Psoas muscle (tissue), 8 donors: ENCODE measurements at regions of chr7 and their contacts with region 1.

Region 1: GRCh38 chr7:159030490-159031134 is 114.1 kb downstream of the VIPR2 start:
- DNase-seq: peak; percentile 60 to 84
- ATAC-seq: peak; percentile 74 to 93 (median 82)
- H3K4me3 ChIP-seq: peak overlapping the region; percentile 76
- H3K27ac ChIP-seq: peak overlapping the region; percentile 72
- H3K4me1 ChIP-seq: no peaks in the 10 kb centered on the region
- H3K27me3 ChIP-seq: peaks cover 0 to 2% (median 0%) of the 10 kb centered on the region in 3 donors
- CTCF ChIP-seq: peak; percentile 46

Region 2: DNA sequence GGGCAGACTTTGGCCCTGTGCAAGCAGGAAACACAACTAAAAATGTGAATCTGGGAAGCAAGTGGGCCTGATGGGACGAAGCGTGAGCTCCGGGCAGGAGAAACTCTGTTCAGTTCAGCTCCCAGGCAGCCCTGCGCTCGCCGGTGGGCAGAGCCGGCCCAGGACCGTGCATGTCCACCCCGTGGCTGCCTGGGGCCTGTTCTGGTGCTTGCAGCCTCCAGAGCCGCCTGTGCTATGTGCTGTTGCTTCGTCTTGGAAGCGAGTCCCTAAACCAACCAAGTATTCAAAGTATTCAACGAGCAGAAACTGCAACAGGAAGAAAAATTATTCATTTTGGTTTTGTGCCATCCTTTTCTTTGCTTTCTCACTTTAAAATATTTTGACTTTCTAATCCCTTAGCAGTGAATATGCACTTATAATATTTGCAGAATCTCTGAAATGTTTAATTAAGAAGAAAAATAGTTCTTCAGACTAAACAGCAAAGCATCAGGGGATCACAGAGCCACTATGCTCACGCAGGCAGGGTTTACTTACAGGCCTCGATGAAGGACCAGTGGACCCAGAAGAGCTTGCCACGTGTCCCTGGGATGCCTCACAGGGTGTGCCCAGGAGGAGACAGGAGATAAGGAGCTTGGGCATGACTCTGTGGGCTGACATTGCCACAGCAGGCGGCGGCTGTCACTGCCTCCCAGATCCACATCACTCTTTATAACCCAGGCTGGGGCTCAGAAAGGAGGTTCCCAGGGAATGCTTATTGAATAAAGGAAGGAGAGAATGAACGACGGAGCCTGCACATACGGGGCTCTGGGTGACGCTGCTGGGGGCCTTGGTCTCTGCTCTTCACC is 68.4 kb after region 1 on chr7:
- intact Hi-C with region 1: loop called in 1 of 2 experiments (anchors 5 kb)
- DNase-seq: peak in 1 of 2 donors; percentile 62
- ATAC-seq: peak in 2 of 4 donors; percentile 20 to 31
- H3K4me3 ChIP-seq: peak overlapping the region; percentile 20
- H3K27ac ChIP-seq: peak overlapping the region; percentile 99
- H3K4me1 ChIP-seq: peaks cover 49% of the 10 kb centered on the region
- H3K27me3 ChIP-seq: no peaks in the 10 kb centered on the region
- CTCF ChIP-seq: no peak